GM12878 (cell line): ENCODE measurements at regions of chr19 and their contacts with region 1.

Region 1: DNA sequence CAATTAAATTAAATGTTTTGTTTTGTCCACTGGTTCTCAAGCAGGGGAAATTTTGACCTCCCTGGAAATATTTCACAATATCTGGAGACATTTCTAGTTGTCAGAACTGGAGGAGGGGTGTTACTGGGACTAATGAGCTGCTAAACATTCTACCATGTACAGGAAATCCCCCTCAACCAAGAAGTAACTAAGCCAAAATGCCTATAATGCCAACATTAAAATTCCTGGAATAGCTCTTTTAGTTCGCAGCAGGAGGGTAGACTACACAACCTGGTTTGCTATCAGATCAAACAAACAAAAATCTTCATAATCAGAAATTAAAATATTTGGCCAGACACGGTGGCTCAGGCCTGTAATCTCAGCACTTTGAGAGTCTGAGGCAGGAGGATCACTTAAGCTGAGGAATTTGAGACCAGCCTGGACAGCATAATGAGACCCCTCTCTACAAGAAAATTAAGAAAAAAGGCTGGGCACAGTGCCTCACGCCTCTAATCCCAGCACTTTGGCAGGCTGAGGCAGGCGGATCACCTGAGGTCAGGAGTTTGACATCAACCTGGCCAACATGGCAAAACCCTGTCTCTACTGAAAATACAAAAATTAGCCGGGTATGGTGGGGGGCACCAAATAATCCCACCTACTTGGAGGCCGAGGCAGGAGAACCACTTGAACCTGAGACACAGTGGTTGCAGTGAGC is 13.7 kb upstream of the SMARCA4 start:
- DNase-seq: no peak
- ATAC-seq: no peak
- H3K4me3 ChIP-seq: no peak overlapping the region
- H3K27ac ChIP-seq: no peak overlapping the region
- H3K4me1 ChIP-seq: no peaks in the 10 kb centered on the region
- H3K27me3 ChIP-seq: no peaks in the 10 kb centered on the region
- CTCF ChIP-seq: no peak
- EP300 ChIP-seq: no peak
- POLR2A ChIP-seq: no peak
- RAD21 ChIP-seq: no peak

Region 2: GRCh38 chr19:10960314-10961072 is 13.4 kb after region 1 on chr19 and contains the start of gene SMARCA4:
- CTCF ChIA-PET with region 1: interaction called, 25 read pairs
- POLR2A ChIA-PET with region 1: interaction called, 10 read pairs
- RAD21 ChIA-PET with region 1: interaction called, 19 read pairs
- SMC1A ChIA-PET with region 1: interaction called, 18 read pairs
- in situ Hi-C with region 1: no loop called
- intact Hi-C with region 1: no loop called
- DNase-seq: peak; percentile 83
- ATAC-seq: peak; percentile 77
- H3K4me3 ChIP-seq: peak within 1 kb of the TSS; percentile 98
- H3K27ac ChIP-seq: peak within 1 kb of the TSS; percentile 77
- H3K4me1 ChIP-seq: peaks cover 17% of the 10 kb centered on the region; the same call in 1 of the 2 replicates
- H3K27me3 ChIP-seq: no peaks in the 10 kb centered on the region
- CTCF ChIP-seq: no peak
- EP300 ChIP-seq: no peak
- POLR2A ChIP-seq: peak; percentile 97
- RAD21 ChIP-seq: no peak
- polyA plus RNA-seq, gene SMARCA4: 22.4 to 43.8 TPM

Region 3: GRCh38 chr19:10968527-10969135 is 21.5 kb after region 1 on chr19:
- CTCF ChIA-PET with region 1: interaction called, 39 read pairs
- POLR2A ChIA-PET with region 1: interaction called, 15 read pairs
- RAD21 ChIA-PET with region 1: interaction called, 30 read pairs
- SMC1A ChIA-PET with region 1: interaction called, 18 read pairs
- in situ Hi-C with region 1: no loop called
- intact Hi-C with region 1: no loop called
- DNase-seq: peak; percentile 41
- ATAC-seq: peak; percentile 74
- H3K4me3 ChIP-seq: peak overlapping the region; percentile 50
- H3K27ac ChIP-seq: peak overlapping the region; percentile 50
- H3K4me1 ChIP-seq: peaks cover 41% of the 10 kb centered on the region
- H3K27me3 ChIP-seq: no peaks in the 10 kb centered on the region
- CTCF ChIP-seq: peak in 1 of 3 experiments; percentile 11; a peak in 1 of 6 replicates
- EP300 ChIP-seq: no peak
- POLR2A ChIP-seq: peak; percentile 29; the same call in 1 of the 2 replicates
- RAD21 ChIP-seq: 0 out of 2 replicates have a peak, but pooled peaks have one; percentile 3

Region 4: DNA sequence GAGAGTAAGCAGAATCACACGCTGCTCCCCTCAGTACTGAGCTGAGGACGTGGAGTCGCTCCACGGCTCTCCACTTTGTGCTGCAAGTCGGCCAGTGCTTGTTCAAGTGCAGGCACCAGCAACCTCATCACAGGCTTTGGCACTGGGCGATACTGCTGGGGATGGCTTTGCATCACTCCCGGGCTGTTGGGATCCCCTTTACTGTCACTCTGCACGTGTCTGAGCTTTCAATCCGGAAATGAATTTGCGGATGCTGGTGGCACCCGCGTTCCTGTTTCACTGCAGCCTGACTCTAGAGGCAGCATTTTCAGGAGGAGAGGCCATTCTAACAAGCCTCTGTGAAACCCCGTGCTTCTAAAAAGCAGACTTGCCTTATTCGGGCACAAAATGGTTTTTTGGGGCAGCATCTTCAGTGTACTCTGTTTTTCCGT is 32.9 kb after region 1 on chr19:
- CTCF ChIA-PET with region 1: interaction called, 16 read pairs
- POLR2A ChIA-PET with region 1: interaction called, 7 read pairs
- RAD21 ChIA-PET with region 1: interaction called, 12 read pairs
- SMC1A ChIA-PET with region 1: interaction called, 17 read pairs
- in situ Hi-C with region 1: no loop called
- intact Hi-C with region 1: loop called (anchors 2 kb)
- DNase-seq: peak; percentile 33
- ATAC-seq: peak; percentile 95
- H3K4me3 ChIP-seq: 0 out of 2 replicates have a peak overlapping the region, but pooled peaks have one; percentile 15
- H3K27ac ChIP-seq: 0 out of 2 replicates have a peak overlapping the region, but pooled peaks have one; percentile 20
- H3K4me1 ChIP-seq: peaks cover 26% of the 10 kb centered on the region
- H3K27me3 ChIP-seq: no peaks in the 10 kb centered on the region
- CTCF ChIP-seq: peak; percentile 24 to 32 (median 31); a peak in 2 of 6 replicates
- EP300 ChIP-seq: no peak
- POLR2A ChIP-seq: no peak
- RAD21 ChIP-seq: peak; percentile 32; the same call in 1 of the 2 replicates

Region 5: DNA sequence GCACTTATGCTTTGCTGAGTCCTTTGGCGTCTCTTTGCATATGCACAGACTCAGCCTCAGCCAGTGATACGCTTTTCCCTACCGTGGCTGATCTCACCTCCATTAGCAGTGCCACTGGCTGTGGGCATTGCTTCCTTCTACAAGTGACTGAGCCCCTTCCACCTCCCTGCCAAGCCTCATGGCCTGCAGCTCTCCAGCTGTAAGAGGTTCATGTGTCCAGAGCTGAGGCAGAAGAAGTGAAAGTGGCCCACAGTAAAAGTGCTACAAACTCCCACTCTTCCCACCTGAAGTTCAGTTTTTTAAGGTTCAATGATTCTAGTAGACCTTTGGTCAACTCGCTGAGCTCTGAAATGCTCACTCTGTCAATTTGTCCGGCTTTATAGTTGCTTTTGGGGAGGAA is 58.4 kb after region 1 on chr19:
- CTCF ChIA-PET with region 1: interaction called, 20 read pairs
- POLR2A ChIA-PET with region 1: interaction called, 3 read pairs
- RAD21 ChIA-PET with region 1: interaction called, 14 read pairs
- SMC1A ChIA-PET with region 1: interaction called, 14 read pairs
- in situ Hi-C with region 1: no loop called
- intact Hi-C with region 1: loop called (anchors 10 kb)
- DNase-seq: no peak
- ATAC-seq: no peak
- H3K4me3 ChIP-seq: no peak overlapping the region
- H3K27ac ChIP-seq: no peak overlapping the region
- H3K4me1 ChIP-seq: no peaks in the 10 kb centered on the region
- H3K27me3 ChIP-seq: no peaks in the 10 kb centered on the region
- CTCF ChIP-seq: no peak
- EP300 ChIP-seq: no peak
- POLR2A ChIP-seq: no peak
- RAD21 ChIP-seq: no peak

Region 6: DNA sequence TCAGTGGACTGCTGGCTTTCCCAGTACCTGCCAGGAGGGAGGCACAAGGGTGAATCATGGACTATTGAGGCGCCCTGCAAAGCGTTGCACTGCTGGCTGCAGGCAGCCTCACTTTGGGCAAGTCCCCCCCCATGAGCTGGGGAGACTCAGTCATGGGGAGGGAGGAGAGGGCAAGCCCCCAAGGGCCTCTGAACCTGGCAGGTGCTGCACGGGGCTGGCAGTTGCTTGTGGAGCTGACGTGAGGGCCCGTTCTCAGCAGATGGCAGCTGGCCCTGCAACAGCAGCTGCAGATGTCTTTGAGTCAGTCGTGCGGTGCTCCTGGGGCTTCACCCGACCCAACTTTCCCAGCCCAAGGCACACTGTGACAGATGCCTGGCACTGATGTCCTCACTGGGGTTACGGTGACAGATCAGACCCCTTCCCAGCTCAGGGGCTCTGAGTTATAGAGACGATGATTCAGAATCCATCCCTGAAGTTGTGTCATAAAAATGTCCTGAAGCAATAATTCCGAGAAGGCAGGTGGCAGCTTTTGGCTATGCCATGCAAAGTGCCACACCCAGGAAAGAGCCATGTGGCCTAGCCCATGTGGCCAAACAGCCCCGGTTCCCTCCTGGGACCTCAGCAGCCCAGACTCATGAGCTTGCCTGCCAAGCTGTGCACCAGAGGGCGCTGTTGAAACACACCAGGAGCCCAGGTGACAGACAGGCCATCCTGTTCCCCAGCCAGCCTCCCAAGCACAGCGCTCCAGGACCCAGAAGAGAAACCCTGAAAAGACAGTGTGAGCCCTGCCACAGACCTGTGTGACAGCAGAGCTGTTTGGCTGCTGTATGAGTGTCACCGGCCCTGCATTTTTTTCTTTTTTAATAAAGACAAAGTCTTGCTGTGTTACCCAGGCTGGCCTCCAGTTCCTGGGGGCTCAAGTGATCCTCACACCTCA is 88.6 kb after region 1 on chr19:
- CTCF ChIA-PET with region 1: interaction called, 37 read pairs
- POLR2A ChIA-PET with region 1: interaction called, 7 read pairs
- RAD21 ChIA-PET with region 1: interaction called, 33 read pairs
- SMC1A ChIA-PET with region 1: interaction called, 18 read pairs
- in situ Hi-C with region 1: no loop called
- intact Hi-C with region 1: no loop called
- DNase-seq: peak; percentile 71
- ATAC-seq: peak; percentile 99
- H3K4me3 ChIP-seq: no peak overlapping the region
- H3K27ac ChIP-seq: no peak overlapping the region; the same call in 1 of the 2 replicates
- H3K4me1 ChIP-seq: peaks cover 4% of the 10 kb centered on the region; the same call in 1 of the 2 replicates
- H3K27me3 ChIP-seq: no peaks in the 10 kb centered on the region
- CTCF ChIP-seq: peak; percentile 93 to 99 (median 97); a peak in 5 of 6 replicates
- EP300 ChIP-seq: no peak
- POLR2A ChIP-seq: peak; percentile 44; the same call in 1 of the 2 replicates
- RAD21 ChIP-seq: peak; percentile 92